ENCODE measurements at regions of chr10 and their contacts with region 1.

Region 1: DNA sequence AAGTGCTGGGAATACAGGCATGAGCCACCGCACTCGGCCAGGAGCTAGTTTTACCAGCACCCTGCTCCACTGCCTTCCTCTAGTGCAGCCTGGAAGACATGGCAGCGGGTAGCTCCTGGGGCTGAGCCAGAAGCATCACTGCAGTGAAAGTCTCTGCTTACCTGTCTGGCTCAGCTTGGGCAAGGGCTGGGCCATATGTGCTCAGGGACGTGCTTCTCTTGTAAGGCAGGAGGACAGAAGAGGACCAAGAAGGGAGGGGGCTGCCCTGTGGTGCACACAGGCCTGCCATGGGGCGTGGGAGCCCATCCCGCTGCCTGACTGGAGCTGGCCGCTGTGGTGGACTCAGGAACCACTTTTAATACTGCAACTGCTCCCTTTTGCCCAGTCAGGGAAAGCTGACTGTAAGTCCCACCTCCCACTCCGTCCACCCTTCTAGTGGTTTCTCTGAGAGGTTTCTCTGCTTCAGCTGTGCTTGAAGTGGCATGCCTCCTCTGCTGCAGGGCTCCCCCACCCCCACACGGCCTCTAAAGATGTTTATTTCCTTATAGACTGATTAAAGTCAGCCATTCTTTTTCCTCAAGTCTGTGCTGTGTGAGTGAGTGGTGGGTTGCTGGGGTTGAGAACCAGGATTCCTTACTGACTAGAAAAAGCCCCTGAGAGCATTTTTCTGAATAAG is 25.3 kb upstream of the C10orf95 start:
- DNase-seq: no peak
- H3K4me3 Mint-ChIP-seq: no peak overlapping the region
- H3K27ac Mint-ChIP-seq: peak overlapping the region; percentile 31
- H3K4me1 Mint-ChIP-seq: peaks cover 43% of the 10 kb centered on the region
- H3K27me3 Mint-ChIP-seq: no peaks in the 10 kb centered on the region

Region 2: DNA sequence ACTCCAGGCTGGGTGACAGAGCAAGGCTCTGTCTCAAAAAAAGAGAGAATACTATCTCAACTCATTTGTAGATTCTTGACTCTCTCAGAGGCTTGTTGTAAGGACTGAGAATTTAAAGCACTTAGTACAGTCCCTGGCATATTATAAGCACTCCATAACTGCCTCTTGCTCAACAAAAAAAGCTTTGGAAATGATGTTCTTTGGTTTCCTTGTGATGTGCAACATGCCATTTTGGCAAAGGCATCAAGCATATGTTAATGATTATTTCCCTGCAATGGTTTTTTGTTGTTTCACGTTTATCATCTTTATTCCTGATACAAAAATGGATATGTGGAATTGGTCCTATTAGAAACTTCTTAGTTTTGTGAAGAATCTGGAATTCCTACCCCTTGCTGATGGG is 308.7 kb before region 1 on chr10:
- CTCF ChIA-PET with region 1: interaction called, 4 read pairs
- intact Hi-C with region 1: loop called (anchors 1 kb)
- DNase-seq: no peak
- H3K4me3 Mint-ChIP-seq: no peak overlapping the region
- H3K27ac Mint-ChIP-seq: no peak overlapping the region
- H3K4me1 Mint-ChIP-seq: peaks cover 10% of the 10 kb centered on the region
- H3K27me3 Mint-ChIP-seq: no peaks in the 10 kb centered on the region

Region 3: DNA sequence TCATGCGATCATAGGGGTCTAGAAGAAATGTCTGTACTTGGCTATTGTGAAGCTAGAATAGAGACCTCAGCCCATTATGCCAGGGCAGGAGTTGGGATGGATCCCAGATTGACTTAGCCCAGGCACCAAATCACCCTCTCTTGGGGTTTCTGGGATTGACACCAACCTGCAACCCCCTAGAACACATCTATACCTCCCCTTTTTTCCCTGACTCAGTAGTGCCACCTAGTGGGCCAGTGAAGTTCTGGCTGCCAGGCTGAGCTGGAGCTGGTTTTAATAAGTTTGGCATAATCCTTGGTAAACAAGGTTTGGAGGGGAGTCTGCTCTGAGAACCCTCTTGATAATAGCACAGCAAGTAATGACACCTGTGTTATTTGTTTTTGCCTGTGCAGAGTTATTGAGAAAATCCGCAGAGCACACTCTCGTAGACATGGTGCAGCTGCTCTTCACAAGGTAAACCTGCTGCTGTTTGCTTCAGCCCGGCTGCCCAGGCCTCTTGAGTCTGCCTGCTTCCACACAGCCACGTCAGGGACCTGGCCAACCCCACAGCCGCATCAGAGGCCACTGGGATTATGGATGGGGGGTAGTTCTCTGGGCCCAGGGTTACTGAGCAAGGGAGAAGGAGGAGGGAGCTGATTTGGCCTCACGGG is 124.4 kb before region 1 on chr10:
- CTCF ChIA-PET with region 1: interaction called, 12 read pairs
- intact Hi-C with region 1: no loop called
- DNase-seq: peak; percentile 87
- H3K4me3 Mint-ChIP-seq: no peak overlapping the region
- H3K27ac Mint-ChIP-seq: no peak overlapping the region
- H3K4me1 Mint-ChIP-seq: no peaks in the 10 kb centered on the region
- H3K27me3 Mint-ChIP-seq: no peaks in the 10 kb centered on the region

Region 4: GRCh38 chr10:102408728-102409603 is 67.6 kb before region 1 on chr10:
- CTCF ChIA-PET with region 1: interaction called, 10 read pairs
- intact Hi-C with region 1: no loop called
- DNase-seq: peak; percentile 85
- H3K4me3 Mint-ChIP-seq: peak overlapping the region; percentile 74
- H3K27ac Mint-ChIP-seq: no peak overlapping the region
- H3K4me1 Mint-ChIP-seq: peaks cover 28% of the 10 kb centered on the region
- H3K27me3 Mint-ChIP-seq: no peaks in the 10 kb centered on the region

Region 5: GRCh38 chr10:102432162-102432950 is 44.2 kb before region 1 on chr10 and contains the start of gene CUEDC2:
- CTCF ChIA-PET with region 1: interaction called, 5 read pairs
- intact Hi-C with region 1: loop called (anchors 1 kb)
- DNase-seq: peak; percentile 99
- H3K4me3 Mint-ChIP-seq: peak within 1 kb of the TSS; percentile 90
- H3K27ac Mint-ChIP-seq: peak within 1 kb of the TSS; percentile 92
- H3K4me1 Mint-ChIP-seq: peaks cover 47% of the 10 kb centered on the region
- H3K27me3 Mint-ChIP-seq: no peaks in the 10 kb centered on the region
- total RNA-seq, gene CUEDC2: 63.3 to 64.4 TPM

Region 6: GRCh38 chr10:102461187-102462054 is 15.2 kb before region 1 on chr10:
- CTCF ChIA-PET with region 1: interaction called, 21 read pairs
- intact Hi-C with region 1: no loop called
- DNase-seq: peak; percentile 94
- H3K4me3 Mint-ChIP-seq: peak overlapping the region; percentile 88
- H3K27ac Mint-ChIP-seq: peak overlapping the region; percentile 73
- H3K4me1 Mint-ChIP-seq: peaks cover 23% of the 10 kb centered on the region
- H3K27me3 Mint-ChIP-seq: no peaks in the 10 kb centered on the region

Region 7: GRCh38 chr10:102523250-102524029 is 46.8 kb after region 1 on chr10:
- CTCF ChIA-PET with region 1: no interaction called
- intact Hi-C with region 1: no loop called
- DNase-seq: no peak
- H3K4me3 Mint-ChIP-seq: no peak overlapping the region
- H3K27ac Mint-ChIP-seq: no peak overlapping the region
- H3K4me1 Mint-ChIP-seq: peaks cover 3% of the 10 kb centered on the region
- H3K27me3 Mint-ChIP-seq: no peaks in the 10 kb centered on the region

Region 8: GRCh38 chr10:102919246-102919959 is 442.8 kb after region 1 on chr10:
- CTCF ChIA-PET with region 1: no interaction called
- intact Hi-C with region 1: no loop called
- DNase-seq: peak; percentile 22
- H3K4me3 Mint-ChIP-seq: peak overlapping the region; percentile 92
- H3K27ac Mint-ChIP-seq: no peak overlapping the region
- H3K4me1 Mint-ChIP-seq: peaks cover 56% of the 10 kb centered on the region
- H3K27me3 Mint-ChIP-seq: peaks cover 5% of the 10 kb centered on the region

Region 9: DNA sequence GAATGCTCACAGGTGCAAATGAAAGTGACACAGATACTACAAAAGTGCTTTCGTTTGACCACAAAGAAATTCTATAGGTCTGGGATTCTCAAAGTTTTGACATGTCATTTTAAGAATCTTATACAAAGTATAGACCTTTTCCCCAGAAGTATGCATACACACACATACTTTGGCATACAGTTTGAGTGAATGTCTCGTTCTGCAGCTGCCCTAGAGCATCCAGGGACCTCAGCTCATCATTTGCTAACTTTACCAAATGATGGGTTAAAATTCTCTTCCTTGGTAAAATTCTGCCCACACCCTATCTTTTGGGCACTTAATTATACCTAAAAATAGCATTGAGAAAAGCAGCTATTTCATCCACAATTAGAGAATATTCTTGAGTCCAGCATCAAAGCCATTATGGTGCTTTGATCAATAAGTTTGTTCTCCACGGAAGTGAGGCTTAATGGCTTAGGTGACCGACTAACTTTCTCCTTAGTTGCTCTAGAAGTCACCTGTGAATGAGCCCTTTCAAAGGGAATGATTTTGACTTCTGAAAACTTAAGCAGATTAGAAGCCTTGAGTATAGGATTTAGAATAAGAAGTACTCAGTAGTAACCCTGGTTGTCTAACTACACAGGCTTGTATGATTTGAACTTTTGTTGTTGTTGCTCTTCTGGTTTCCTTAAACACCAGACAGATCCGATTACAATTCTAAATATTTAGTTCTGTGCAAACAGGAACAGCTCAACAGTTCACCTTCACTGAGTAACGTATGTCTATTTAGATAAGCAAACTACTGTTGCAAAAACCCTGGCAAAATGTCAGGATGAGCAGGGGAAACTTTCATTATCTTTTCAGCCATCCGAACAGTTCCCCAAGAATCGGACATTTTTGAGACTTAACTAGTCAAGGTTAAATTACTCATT is 512.1 kb after region 1 on chr10:
- CTCF ChIA-PET with region 1: no interaction called
- intact Hi-C with region 1: no loop called
- DNase-seq: no peak
- H3K4me3 Mint-ChIP-seq: no peak overlapping the region
- H3K27ac Mint-ChIP-seq: no peak overlapping the region
- H3K4me1 Mint-ChIP-seq: peaks cover 2% of the 10 kb centered on the region
- H3K27me3 Mint-ChIP-seq: no peaks in the 10 kb centered on the region

Region 10: GRCh38 chr10:103396064-103396788 is 919.6 kb after region 1 on chr10 and contains the starts of genes ATP5MK and PDCD11:
- CTCF ChIA-PET with region 1: no interaction called
- intact Hi-C with region 1: no loop called
- DNase-seq: peak; percentile 99
- H3K4me3 Mint-ChIP-seq: peak within 1 kb of the TSS; percentile 97
- H3K27ac Mint-ChIP-seq: peak within 1 kb of the TSS; percentile 85
- H3K4me1 Mint-ChIP-seq: peaks cover 69% of the 10 kb centered on the region
- H3K27me3 Mint-ChIP-seq: no peaks in the 10 kb centered on the region
- total RNA-seq, gene ATP5MK: 422 to 423 TPM
- total RNA-seq, gene PDCD11: 50.1 TPM